OCI-LY7 (cell line): ENCODE measurements at regions of chr19 and their contacts with region 1.

Region 1: DNA sequence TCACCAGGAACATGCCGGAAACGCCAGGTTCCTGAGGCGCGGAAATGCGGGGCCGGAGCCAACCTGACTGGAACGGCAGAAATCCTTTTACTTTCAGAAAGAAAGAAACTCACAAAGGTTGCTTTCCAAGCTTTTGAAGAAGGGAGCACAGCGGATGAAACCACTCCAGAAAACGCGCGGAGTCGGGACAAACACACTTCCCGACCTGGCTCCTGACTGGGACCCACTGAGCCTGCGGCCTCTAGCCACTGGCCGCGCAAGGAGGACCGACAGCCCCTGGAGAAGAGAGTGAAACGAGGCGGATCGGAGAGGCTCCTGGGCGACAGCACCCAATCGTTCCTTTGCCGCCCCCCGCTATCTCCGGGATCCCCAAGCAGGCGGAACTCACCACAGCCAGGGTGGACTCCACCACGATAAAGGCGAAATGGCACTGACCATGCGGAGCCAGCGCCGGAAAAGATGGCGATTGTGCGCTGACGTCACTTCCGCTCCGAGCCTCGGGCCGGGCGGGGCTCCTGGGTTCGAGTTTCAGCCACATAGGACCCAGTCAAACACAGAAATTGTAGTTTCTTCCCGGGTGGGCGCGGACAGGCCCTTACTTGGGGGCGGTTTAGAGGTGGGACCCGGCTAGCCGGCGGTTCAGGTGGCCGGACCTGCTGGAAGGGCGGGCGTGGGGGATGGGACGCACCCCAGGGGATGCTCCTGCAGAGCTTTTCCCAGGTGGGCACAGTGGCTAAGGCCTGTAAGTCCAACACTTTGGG is at the start of gene ZNF121:
- DNase-seq: peak; percentile 90
- H3K4me3 ChIP-seq: peak within 1 kb of the TSS; percentile 100
- H3K27ac ChIP-seq: peak within 1 kb of the TSS; percentile 74
- H3K4me1 ChIP-seq: peaks cover 18% of the 10 kb centered on the region
- CTCF ChIP-seq: no peak
- total RNA-seq, gene ZNF121: 55.3 and 74.4 TPM in 2 replicates

Region 2: GRCh38 chr19:9309139-9309973 is 274.9 kb before region 1 on chr19 and contains the start of gene ZNF699:
- CTCF ChIA-PET with region 1: no interaction called
- POLR2A ChIA-PET with region 1: interaction called, 4 read pairs
- intact Hi-C with region 1: loop called (anchors 5 kb)
- DNase-seq: peak; percentile 99
- H3K4me3 ChIP-seq: peak within 1 kb of the TSS; percentile 80
- H3K27ac ChIP-seq: peak within 1 kb of the TSS; percentile 69
- H3K4me1 ChIP-seq: peaks cover 12% of the 10 kb centered on the region
- CTCF ChIP-seq: no peak
- total RNA-seq, gene ZNF699: 8.2 and 9.7 TPM in 2 replicates

Region 3: GRCh38 chr19:9621156-9622037 is 37.1 kb after region 1 on chr19 and contains the start of gene ZNF561:
- CTCF ChIA-PET with region 1: interaction called, 3 read pairs
- POLR2A ChIA-PET with region 1: interaction called, 3 read pairs
- intact Hi-C with region 1: loop called (anchors 5 kb)
- DNase-seq: peak; percentile 92
- H3K4me3 ChIP-seq: peak within 1 kb of the TSS; percentile 78
- H3K27ac ChIP-seq: peak within 1 kb of the TSS; percentile 66
- H3K4me1 ChIP-seq: peaks cover 6% of the 10 kb centered on the region
- CTCF ChIP-seq: no peak
- total RNA-seq, gene ZNF561: 14.9 and 17.3 TPM in 2 replicates